ENCODE measurements at regions of chr11 and their contacts with region 1.

Region 1: DNA sequence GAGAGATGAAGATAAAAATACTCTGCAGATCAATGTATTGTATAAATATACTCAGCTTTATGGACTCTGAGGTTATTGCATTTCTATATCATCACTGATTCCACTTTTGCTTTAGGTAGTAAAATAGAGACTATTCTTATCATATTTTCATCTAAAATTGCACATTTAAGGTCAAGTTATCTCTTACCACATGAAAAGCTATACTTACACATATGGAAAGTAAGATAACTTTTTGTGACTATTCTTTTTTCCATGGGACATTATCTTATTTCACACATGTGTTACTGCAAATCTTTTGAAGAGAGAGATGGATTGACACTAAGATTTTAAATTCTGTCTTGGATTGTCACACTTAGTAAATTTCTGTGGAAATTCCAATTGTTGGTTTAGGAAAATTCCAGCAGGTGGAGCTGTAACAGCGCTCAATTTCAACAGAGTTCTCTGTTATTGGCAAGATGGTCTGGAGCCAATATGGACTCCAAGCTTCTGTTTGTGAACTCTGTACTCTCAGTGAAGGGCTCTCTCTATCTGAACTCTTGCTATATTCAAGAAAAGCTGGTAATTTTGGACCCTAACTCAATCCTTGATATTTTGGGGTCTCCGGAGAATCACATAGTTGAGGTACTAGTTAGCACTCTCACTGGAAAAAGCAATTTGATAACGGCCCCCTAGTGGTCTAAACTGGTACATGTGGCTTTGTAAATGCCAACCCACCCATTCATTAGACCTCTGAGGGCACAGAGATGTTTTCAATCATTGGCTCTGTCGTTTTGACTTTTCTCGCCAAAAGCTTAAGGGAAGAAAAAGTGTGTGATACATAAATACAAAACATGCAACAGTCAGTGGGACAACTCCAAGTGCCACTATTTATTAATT is 429.7 kb downstream of the ETS1 start:
- DNase-seq: peak; percentile 78
- H3K4me3 Mint-ChIP-seq: peak overlapping the region; percentile 33
- H3K27ac Mint-ChIP-seq: peak overlapping the region; percentile 42
- H3K4me1 Mint-ChIP-seq: no peaks in the 10 kb centered on the region
- H3K27me3 Mint-ChIP-seq: no peaks in the 10 kb centered on the region
- CTCF ChIP-seq: peak; percentile 88

Region 2: GRCh38 chr11:126440792-126441514 is 1716.7 kb before region 1 on chr11:
- CTCF ChIA-PET with region 1: no interaction called
- POLR2A ChIA-PET with region 1: no interaction called
- intact Hi-C with region 1: loop called (anchors 5 kb)
- DNase-seq: peak; percentile 80
- H3K4me3 Mint-ChIP-seq: no peak overlapping the region
- H3K27ac Mint-ChIP-seq: no peak overlapping the region
- H3K4me1 Mint-ChIP-seq: peaks cover 5% of the 10 kb centered on the region
- H3K27me3 Mint-ChIP-seq: no peaks in the 10 kb centered on the region
- CTCF ChIP-seq: peak; percentile 95

Region 3: DNA sequence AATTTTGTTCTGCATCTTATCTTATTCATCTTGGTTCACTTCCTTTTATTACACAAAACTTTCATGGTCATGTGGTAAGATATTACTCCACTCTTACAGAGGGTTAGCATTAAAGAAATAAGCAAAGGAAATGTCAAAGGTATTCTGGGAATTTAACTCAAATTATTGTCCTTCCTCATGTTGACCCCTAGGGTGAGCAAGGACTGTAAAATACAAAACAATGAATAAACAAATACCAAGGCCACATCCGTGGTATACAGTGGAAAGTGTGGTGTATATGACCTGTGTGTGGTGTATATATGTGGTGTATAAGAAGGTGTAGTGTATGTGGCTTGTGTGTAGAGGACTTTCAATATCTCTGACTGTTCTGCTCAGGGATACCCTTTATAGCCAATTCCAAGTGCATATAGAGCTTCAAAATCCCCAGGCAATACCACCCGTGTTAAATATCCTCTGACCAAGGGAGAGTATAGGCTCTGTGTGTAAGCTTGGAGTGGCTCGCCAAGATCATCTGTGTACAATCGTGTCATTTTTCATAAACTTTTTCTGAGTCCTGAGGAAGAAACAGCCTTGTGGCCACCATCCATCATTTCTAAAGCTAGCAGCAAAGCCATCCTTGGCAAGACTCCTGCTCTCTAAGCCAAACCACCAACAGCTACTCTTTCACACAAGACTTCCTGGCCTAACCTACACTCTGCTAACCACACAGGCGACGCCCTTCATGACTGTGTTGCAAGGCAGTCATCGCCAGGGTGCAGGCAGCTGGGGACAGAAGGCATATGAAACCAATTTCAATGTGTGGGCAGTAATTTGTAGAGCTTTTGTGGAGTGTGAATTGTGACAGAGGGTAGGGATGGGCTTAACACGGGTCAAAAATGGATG is 118.3 kb before region 1 on chr11:
- CTCF ChIA-PET with region 1: interaction called, 58 read pairs
- POLR2A ChIA-PET with region 1: interaction called, 7 read pairs
- intact Hi-C with region 1: no loop called
- DNase-seq: peak; percentile 94
- H3K4me3 Mint-ChIP-seq: peak overlapping the region; percentile 3
- H3K27ac Mint-ChIP-seq: peak overlapping the region; percentile 0
- H3K4me1 Mint-ChIP-seq: peaks cover 24% of the 10 kb centered on the region
- H3K27me3 Mint-ChIP-seq: no peaks in the 10 kb centered on the region
- CTCF ChIP-seq: no peak

Region 4: DNA sequence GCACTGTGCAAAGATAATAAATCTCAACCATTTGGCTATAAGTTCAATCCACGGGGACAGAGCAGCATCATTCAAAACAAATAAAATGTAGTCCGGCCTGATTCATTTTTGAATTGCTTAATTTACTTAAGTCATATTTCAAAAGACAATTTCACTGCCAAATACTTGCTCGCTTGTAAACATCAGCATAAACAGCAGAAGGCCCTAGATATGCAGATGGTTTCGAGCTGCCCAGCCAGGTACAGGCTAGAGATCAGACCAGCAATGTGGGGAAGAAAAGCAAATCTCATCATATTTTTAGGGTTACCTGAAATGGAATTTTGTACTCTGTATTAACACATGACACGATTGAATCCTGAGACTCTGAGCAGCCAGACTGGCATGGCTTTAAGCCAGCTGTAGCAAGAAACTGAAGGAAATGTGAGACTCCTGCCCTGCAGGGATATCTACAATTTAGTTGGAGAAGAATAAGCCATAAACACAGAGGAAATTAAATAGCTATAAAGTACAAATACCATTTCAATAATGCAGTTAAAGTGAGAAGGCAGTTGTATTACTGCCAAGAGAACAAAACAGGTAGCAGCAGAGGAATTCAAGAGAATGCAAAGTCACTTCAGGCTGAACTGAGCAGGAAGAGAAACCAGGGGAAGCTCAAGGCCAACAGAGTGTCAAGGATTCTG is 10.6 kb before region 1 on chr11:
- CTCF ChIA-PET with region 1: interaction called, 62 read pairs
- POLR2A ChIA-PET with region 1: interaction called, 8 read pairs
- intact Hi-C with region 1: no loop called
- DNase-seq: peak; percentile 73
- H3K4me3 Mint-ChIP-seq: peak overlapping the region; percentile 48
- H3K27ac Mint-ChIP-seq: peak overlapping the region; percentile 92
- H3K4me1 Mint-ChIP-seq: peaks cover 22% of the 10 kb centered on the region
- H3K27me3 Mint-ChIP-seq: no peaks in the 10 kb centered on the region
- CTCF ChIP-seq: no peak

Region 5: GRCh38 chr11:128290106-128290840 is 132.6 kb after region 1 on chr11:
- CTCF ChIA-PET with region 1: interaction called, 17 read pairs
- POLR2A ChIA-PET with region 1: no interaction called
- intact Hi-C with region 1: no loop called
- DNase-seq: peak; percentile 72
- H3K4me3 Mint-ChIP-seq: no peak overlapping the region
- H3K27ac Mint-ChIP-seq: no peak overlapping the region
- H3K4me1 Mint-ChIP-seq: peaks cover 15% of the 10 kb centered on the region
- H3K27me3 Mint-ChIP-seq: no peaks in the 10 kb centered on the region
- CTCF ChIP-seq: peak; percentile 76

Region 6: GRCh38 chr11:128686745-128687177 is 529.1 kb after region 1 on chr11:
- CTCF ChIA-PET with region 1: no interaction called
- POLR2A ChIA-PET with region 1: no interaction called
- intact Hi-C with region 1: no loop called
- DNase-seq: no peak
- H3K4me3 Mint-ChIP-seq: no peak overlapping the region
- H3K27ac Mint-ChIP-seq: no peak overlapping the region
- H3K4me1 Mint-ChIP-seq: no peaks in the 10 kb centered on the region
- H3K27me3 Mint-ChIP-seq: peaks cover 52% of the 10 kb centered on the region
- CTCF ChIP-seq: no peak

Region 7: GRCh38 chr11:128831174-128832120 is 673.8 kb after region 1 on chr11:
- CTCF ChIA-PET with region 1: interaction called, 137 read pairs
- POLR2A ChIA-PET with region 1: no interaction called
- intact Hi-C with region 1: loop called (anchors 1 kb)
- DNase-seq: peak; percentile 86
- H3K4me3 Mint-ChIP-seq: no peak overlapping the region
- H3K27ac Mint-ChIP-seq: no peak overlapping the region
- H3K4me1 Mint-ChIP-seq: peaks cover 10% of the 10 kb centered on the region
- H3K27me3 Mint-ChIP-seq: no peaks in the 10 kb centered on the region
- CTCF ChIP-seq: peak; percentile 79